Activated CD4-positive, alpha-beta T cell treated with anti-CD3 and anti-CD28 coated beads, Interleukin-2, amount 10 ng/mL, durations not matched to agents 24 days and 14 days (primary cell): ENCODE measurements at regions of chr16 and their contacts with region 1.

Region 1: GRCh38 chr16:11407047-11407982 is 62.1 kb downstream of the RMI2 start:
- DNase-seq: peak; percentile 90
- H3K4me3 Mint-ChIP-seq: no peak overlapping the region
- H3K27ac Mint-ChIP-seq: no peak overlapping the region
- H3K4me1 Mint-ChIP-seq: peaks cover 2% of the 10 kb centered on the region
- H3K27me3 Mint-ChIP-seq: peaks cover 3% of the 10 kb centered on the region

Region 2: DNA sequence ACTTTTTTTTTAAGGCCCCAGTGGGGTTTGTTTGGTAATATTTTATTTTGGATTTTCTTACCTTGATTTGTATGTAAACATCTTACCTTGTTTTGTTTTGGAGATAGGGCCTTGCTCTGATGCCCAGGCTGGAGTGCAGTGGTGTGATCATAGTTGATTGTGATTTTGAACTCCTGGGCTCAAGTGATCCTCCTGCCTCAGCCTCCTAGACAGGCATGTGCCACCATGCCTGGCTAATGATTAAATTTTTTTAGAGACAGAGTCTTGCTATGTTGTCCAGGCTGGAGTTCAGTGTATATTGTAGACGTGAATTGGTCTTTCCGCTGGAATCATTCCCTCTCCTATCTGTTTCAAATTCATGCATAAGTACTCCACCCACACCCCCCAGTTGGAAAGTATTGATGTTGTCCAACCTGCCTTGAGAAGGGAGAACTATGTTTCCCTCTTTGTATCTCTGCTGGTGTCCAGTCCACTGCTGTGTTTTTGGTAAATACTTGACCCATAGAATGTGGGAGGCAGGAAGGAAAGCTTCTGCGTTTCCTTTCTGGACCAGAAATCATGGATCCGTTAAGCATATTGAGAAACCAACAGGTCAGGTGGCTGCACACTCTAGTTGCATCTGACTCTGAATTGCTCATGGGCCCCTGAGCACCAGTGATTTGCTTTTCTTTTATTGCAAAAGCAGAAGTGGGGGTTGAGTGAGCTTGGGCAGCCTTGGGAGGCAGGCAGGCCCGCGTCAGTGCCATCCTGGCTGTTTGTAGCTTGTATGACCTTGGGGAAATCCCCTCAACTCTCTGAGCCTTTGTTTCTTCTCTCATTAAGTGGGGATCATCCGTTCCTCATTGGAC is 37.0 kb before region 1 on chr16:
- intact Hi-C with region 1: no loop called
- DNase-seq: peak; percentile 65
- H3K4me3 Mint-ChIP-seq: no peak overlapping the region
- H3K27ac Mint-ChIP-seq: no peak overlapping the region
- H3K4me1 Mint-ChIP-seq: peaks cover 14% of the 10 kb centered on the region
- H3K27me3 Mint-ChIP-seq: no peaks in the 10 kb centered on the region

Region 3: GRCh38 chr16:11535471-11535870 is 128.2 kb after region 1 on chr16:
- intact Hi-C with region 1: loop called (anchors 5 kb)
- DNase-seq: no peak
- H3K4me3 Mint-ChIP-seq: no peak overlapping the region
- H3K27ac Mint-ChIP-seq: no peak overlapping the region
- H3K4me1 Mint-ChIP-seq: peaks cover 6% of the 10 kb centered on the region
- H3K27me3 Mint-ChIP-seq: no peaks in the 10 kb centered on the region

Region 4: DNA sequence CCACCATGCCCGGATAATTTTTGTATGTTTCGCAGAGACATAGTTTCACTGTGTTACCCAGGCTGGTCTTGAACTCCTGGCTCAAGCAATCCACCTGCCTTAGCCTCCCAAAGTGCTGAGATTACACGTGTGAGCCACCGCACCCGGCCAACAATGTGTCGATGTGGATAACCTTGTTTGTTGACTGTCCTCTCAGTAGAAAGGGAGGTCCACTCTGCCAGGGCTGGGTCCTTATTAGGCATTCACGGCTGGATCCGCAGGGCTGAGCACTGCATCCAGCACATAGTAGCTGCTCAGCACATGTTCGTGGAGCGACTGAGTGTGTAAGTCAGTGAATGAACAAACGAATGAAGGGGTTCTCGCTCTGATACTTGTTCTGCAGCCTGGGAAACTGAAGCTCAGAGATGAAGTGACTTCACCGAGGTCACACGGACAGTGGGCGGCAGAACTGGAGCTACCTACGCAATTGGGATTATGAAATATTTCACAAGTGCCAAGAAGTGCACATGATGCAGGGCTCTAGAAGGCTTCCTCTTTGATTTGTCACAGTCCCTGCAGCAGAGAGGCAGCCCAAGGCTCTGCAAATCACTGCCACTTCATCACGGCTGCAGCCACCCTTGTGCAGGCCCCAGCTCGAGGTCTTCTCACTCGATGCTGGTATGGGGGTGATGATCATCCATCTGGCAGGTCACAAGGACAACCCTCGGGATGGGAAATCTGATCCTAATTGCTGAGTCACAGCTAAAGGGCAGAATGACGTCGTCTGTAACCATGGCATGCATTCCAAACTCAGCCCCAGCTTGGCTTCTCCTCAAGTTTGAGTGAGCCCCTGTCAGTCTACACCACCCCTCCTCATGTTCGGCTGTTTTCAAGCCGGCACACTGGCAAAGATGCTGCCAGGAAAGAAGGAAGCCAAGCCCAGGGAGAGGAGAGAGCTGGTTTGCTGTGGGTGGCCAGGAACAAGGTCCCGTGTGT is 232.9 kb after region 1 on chr16:
- intact Hi-C with region 1: loop called (anchors 2 kb)
- DNase-seq: no peak
- H3K4me3 Mint-ChIP-seq: no peak overlapping the region
- H3K27ac Mint-ChIP-seq: no peak overlapping the region
- H3K4me1 Mint-ChIP-seq: peaks cover 8% of the 10 kb centered on the region
- H3K27me3 Mint-ChIP-seq: peaks cover 21% of the 10 kb centered on the region

Region 5: GRCh38 chr16:11715246-11715947 is 308.1 kb after region 1 on chr16:
- intact Hi-C with region 1: loop called (anchors 1 kb)
- DNase-seq: no peak
- H3K4me3 Mint-ChIP-seq: no peak overlapping the region
- H3K27ac Mint-ChIP-seq: no peak overlapping the region
- H3K4me1 Mint-ChIP-seq: peaks cover 5% of the 10 kb centered on the region
- H3K27me3 Mint-ChIP-seq: no peaks in the 10 kb centered on the region

Region 6: DNA sequence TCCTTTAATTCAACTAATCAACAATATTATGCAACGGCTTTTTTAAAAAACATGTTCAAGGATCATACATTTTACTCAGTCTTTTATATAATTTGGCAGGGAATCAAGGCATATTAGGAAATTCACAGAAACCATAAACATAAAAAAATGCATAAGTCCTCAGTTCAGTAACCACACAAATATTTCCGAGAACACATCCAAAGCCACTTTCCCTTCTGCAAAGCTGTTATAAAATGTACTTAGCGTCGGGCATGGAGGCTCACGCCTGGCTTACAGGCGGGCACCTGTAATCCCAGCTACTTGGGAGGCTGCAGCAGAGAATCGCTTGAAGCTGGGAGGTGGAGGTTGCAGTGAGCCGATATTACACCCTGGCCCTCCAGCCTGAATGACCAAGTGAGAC is 399.4 kb after region 1 on chr16:
- intact Hi-C with region 1: loop called (anchors 5 kb)
- DNase-seq: no peak
- H3K4me3 Mint-ChIP-seq: no peak overlapping the region
- H3K27ac Mint-ChIP-seq: no peak overlapping the region
- H3K4me1 Mint-ChIP-seq: peaks cover 7% of the 10 kb centered on the region
- H3K27me3 Mint-ChIP-seq: no peaks in the 10 kb centered on the region